ENCODE measurements at regions of chr3 and their contacts with region 1.

Region 1: GRCh38 chr3:28348629-28349483 is at the starts of genes AZI2 and ZCWPW2:
- DNase-seq: peak; percentile 88 to 93 (median 92)
- ATAC-seq: peak; percentile 92
- H3K4me3 ChIP-seq: peak within 1 kb of the TSS; percentile 93
- H3K4me3 Mint-ChIP-seq: peak within 1 kb of the TSS; percentile 88 to 99 (median 94)
- H3K27ac ChIP-seq: peak within 1 kb of the TSS; percentile 92
- H3K27ac Mint-ChIP-seq: peak within 1 kb of the TSS; percentile 96 to 100 (median 98)
- H3K4me1 ChIP-seq: peaks cover 35 to 39% of the 10 kb centered on the region in 2 donors
- H3K4me1 Mint-ChIP-seq: peaks cover 30 to 70% (median 57%) of the 10 kb centered on the region in 7 donors
- H3K27me3 ChIP-seq: no peaks in the 10 kb centered on the region
- H3K27me3 Mint-ChIP-seq: no peaks in the 10 kb centered on the region
- total RNA-seq, gene AZI2: 39.7 to 54.0 (median 41.2) TPM
- total RNA-seq, gene ZCWPW2: 0.56 to 1.3 (median 0.81) TPM

Region 2: GRCh38 chr3:27368831-27369607 is 979.8 kb before region 1 on chr3 and contains the start of gene NEK10:
- CTCF ChIA-PET with region 1: no interaction called
- POLR2A ChIA-PET with region 1: no interaction called
- intact Hi-C with region 1: loop called (anchors 1 kb)
- DNase-seq: peak; percentile 86 to 94 (median 91)
- ATAC-seq: peak; percentile 100
- H3K4me3 ChIP-seq: peak within 1 kb of the TSS; percentile 96
- H3K4me3 Mint-ChIP-seq: peak within 1 kb of the TSS; percentile 81 to 96 (median 93)
- H3K27ac ChIP-seq: peak within 1 kb of the TSS; percentile 11
- H3K27ac Mint-ChIP-seq: peak within 1 kb of the TSS; percentile 26 to 91 (median 85)
- H3K4me1 ChIP-seq: peaks cover 5 to 9% of the 10 kb centered on the region in 2 donors
- H3K4me1 Mint-ChIP-seq: peaks cover 7 to 18% (median 14%) of the 10 kb centered on the region in 7 donors
- H3K27me3 ChIP-seq: no peaks in the 10 kb centered on the region
- H3K27me3 Mint-ChIP-seq: peaks cover 0 to 4% (median 0%) of the 10 kb centered on the region in 5 donors
- total RNA-seq, gene NEK10: 0.64 to 2.0 (median 0.95) TPM

Region 3: DNA sequence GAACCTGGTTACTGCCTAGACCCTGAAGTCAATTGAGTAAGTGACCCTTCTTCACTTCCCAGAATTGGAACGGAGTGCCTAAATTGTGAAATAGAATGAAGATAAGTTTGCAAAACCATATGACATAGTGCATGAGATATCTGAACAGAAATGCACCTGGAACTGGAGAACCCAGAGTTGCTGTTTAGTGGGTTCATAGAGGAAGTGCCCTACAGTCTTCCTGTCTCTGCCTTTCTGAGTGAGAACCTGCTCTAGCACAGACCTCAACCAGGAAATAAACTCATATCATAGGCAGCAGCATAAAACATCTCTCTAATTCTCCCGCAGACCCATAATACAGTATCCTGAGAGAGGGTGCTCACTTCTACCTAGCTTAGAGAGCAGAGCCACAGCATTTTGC is 709.6 kb before region 1 on chr3:
- CTCF ChIA-PET with region 1: no interaction called
- POLR2A ChIA-PET with region 1: interaction called, 3 read pairs
- intact Hi-C with region 1: loop called in 1 of 2 experiments (anchors 2 kb)
- DNase-seq: peak in 6 of 9 donors; percentile 33 to 70 (median 61)
- ATAC-seq: peak; percentile 91
- H3K4me3 ChIP-seq: no peak overlapping the region
- H3K4me3 Mint-ChIP-seq: peak overlapping the region; percentile 18 to 75 (median 56)
- H3K27ac ChIP-seq: peak overlapping the region; percentile 65
- H3K27ac Mint-ChIP-seq: peak overlapping the region; percentile 74 to 93 (median 90)
- H3K4me1 ChIP-seq: peaks cover 11 to 18% of the 10 kb centered on the region in 2 donors
- H3K4me1 Mint-ChIP-seq: peaks cover 10 to 26% (median 21%) of the 10 kb centered on the region in 7 donors
- H3K27me3 ChIP-seq: no peaks in the 10 kb centered on the region
- H3K27me3 Mint-ChIP-seq: peaks cover 0 to 7% (median 0%) of the 10 kb centered on the region in 5 donors

Region 4: GRCh38 chr3:27729748-27730611 is 618.9 kb before region 1 on chr3:
- CTCF ChIA-PET with region 1: no interaction called
- POLR2A ChIA-PET with region 1: no interaction called
- intact Hi-C with region 1: no loop called
- DNase-seq: no peak
- ATAC-seq: no peak
- H3K4me3 ChIP-seq: peak overlapping the region; percentile 18
- H3K4me3 Mint-ChIP-seq: peak overlapping the region; percentile 25 to 79 (median 66)
- H3K27ac ChIP-seq: no peak overlapping the region
- H3K27ac Mint-ChIP-seq: peak overlapping the region in 2 of 9 donors; percentile 28 to 31
- H3K4me1 ChIP-seq: peaks cover 9 to 28% of the 10 kb centered on the region in 2 donors
- H3K4me1 Mint-ChIP-seq: peaks cover 23 to 42% (median 37%) of the 10 kb centered on the region in 7 donors
- H3K27me3 ChIP-seq: peaks cover 0 to 45% of the 10 kb centered on the region in 2 donors
- H3K27me3 Mint-ChIP-seq: peaks cover 65 to 82% (median 67%) of the 10 kb centered on the region in 5 donors

Region 5: DNA sequence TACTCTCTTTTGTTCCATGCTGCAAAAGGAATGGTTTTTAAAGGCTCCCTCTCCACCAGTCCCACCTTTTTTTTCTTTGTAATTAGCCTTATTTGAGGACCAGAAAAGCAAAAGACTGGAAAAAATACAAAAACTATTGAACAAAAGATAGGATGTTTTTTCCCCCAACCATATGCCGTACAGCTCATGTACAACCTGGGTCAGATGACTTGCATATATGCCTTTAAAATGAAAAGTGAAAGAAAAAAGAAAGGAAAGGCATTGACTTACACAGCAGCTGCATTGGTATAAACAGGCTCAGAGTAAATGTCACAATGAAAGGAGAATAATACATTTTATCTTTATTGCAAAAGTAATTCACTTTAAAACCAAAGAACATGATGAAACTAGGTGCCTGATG is 176.9 kb before region 1 on chr3:
- CTCF ChIA-PET with region 1: no interaction called
- POLR2A ChIA-PET with region 1: no interaction called
- intact Hi-C with region 1: loop called in 1 of 2 experiments (anchors 1 kb)
- DNase-seq: peak in 6 of 9 donors; percentile 12 to 53 (median 36)
- ATAC-seq: peak; percentile 67
- H3K4me3 ChIP-seq: peak overlapping the region; percentile 21
- H3K4me3 Mint-ChIP-seq: peak overlapping the region in 9 of 10 donors; percentile 63 to 85 (median 80)
- H3K27ac ChIP-seq: no peak overlapping the region
- H3K27ac Mint-ChIP-seq: peak overlapping the region; percentile 11 to 91 (median 77)
- H3K4me1 ChIP-seq: peaks cover 5 to 9% of the 10 kb centered on the region in 2 donors
- H3K4me1 Mint-ChIP-seq: peaks cover 6 to 24% (median 18%) of the 10 kb centered on the region in 7 donors
- H3K27me3 ChIP-seq: no peaks in the 10 kb centered on the region
- H3K27me3 Mint-ChIP-seq: no peaks in the 10 kb centered on the region

Region 6: DNA sequence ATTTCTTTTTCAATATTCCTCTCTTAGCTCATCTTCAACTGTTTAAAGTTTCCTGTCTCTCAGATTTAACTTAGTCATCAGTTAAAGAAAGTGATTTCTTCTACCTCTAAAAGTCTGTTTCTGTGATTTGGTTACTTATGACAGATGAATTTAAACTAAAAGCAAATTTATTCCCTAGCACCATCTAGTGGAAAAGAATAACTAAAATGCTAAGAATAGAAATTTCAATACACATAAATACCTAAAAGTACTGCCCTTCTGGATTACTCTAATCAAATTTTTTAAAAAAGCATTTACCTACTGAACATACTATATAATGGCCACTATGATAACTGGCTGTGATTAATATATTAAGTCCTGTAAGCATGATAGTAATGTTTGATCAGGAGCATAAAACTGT is 14.3 kb before region 1 on chr3:
- CTCF ChIA-PET with region 1: interaction called, 6 read pairs
- POLR2A ChIA-PET with region 1: interaction called, 23 read pairs
- intact Hi-C with region 1: no loop called
- DNase-seq: no peak
- ATAC-seq: no peak
- H3K4me3 ChIP-seq: no peak overlapping the region
- H3K4me3 Mint-ChIP-seq: no peak overlapping the region
- H3K27ac ChIP-seq: no peak overlapping the region
- H3K27ac Mint-ChIP-seq: no peak overlapping the region
- H3K4me1 ChIP-seq: peaks cover 0 to 4% of the 10 kb centered on the region in 2 donors
- H3K4me1 Mint-ChIP-seq: peaks cover 3 to 19% (median 15%) of the 10 kb centered on the region in 7 donors
- H3K27me3 ChIP-seq: no peaks in the 10 kb centered on the region
- H3K27me3 Mint-ChIP-seq: no peaks in the 10 kb centered on the region